ENCODE measurements at regions of chr19 and their contacts with region 1.

Region 1: GRCh38 chr19:55599468-55600279 is at the start of gene FIZ1:
- DNase-seq: peak; percentile 98
- H3K4me3 ChIP-seq: peak within 1 kb of the TSS; percentile 60 to 92 (median 80)
- H3K27ac ChIP-seq: peak within 1 kb of the TSS; percentile 89
- H3K4me1 ChIP-seq: peaks cover 10% of the 10 kb centered on the region
- H3K27me3 ChIP-seq: no peaks in the 10 kb centered on the region
- CTCF ChIP-seq: no peak
- total RNA-seq, gene FIZ1: 5.3 to 13.4 TPM

Region 2: DNA sequence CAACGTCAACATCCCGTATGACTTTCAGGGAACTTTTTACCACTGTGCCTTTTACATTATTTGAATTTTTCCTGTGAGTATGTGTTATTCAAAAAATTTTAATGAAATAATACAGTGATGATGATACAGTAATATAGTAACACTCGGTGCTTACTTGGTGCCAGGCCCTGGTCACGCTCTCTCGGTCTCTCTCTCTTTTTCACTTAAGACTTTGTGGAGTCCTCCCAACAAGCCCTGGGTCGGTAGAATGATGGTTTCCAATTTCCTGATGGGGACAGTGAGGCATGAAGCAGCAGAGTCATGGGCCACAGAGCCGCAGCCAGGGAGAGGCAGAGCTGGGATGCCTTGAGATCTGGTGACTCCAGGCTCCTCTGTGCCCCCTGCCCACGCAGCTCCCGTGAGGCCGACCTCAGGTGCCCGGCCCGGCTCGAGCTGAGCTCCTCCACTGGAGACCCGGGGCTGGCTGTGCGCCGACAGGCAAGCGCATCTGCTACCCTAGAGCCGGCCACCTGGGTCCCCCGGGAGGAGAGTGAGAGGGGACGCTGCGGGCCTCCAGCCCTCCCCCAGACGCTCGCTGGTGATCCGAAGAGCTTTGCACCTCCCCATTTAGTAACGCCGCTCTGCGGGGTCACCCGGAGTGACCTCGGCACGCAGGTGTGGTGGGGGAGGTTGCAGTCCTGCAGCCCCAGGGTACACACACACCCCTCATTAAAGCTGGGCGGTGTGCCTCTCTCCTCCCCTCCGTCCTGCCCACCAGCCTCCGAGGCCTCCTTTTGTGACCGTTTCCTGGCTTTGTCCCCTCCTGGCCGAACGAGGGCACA is 50.0 kb before region 1 on chr19:
- CTCF ChIA-PET with region 1: no interaction called
- dilution Hi-C with region 1: no loop called
- in situ Hi-C with region 1: no loop called
- intact Hi-C with region 1: loop called (anchors 5 kb)
- DNase-seq: peak; percentile 65
- H3K4me3 ChIP-seq: peak overlapping the region in 2 of 3 experiments; percentile 9 to 28
- H3K27ac ChIP-seq: peak overlapping the region; percentile 61
- H3K4me1 ChIP-seq: peaks cover 32% of the 10 kb centered on the region
- H3K27me3 ChIP-seq: no peaks in the 10 kb centered on the region
- CTCF ChIP-seq: no peak

Region 3: DNA sequence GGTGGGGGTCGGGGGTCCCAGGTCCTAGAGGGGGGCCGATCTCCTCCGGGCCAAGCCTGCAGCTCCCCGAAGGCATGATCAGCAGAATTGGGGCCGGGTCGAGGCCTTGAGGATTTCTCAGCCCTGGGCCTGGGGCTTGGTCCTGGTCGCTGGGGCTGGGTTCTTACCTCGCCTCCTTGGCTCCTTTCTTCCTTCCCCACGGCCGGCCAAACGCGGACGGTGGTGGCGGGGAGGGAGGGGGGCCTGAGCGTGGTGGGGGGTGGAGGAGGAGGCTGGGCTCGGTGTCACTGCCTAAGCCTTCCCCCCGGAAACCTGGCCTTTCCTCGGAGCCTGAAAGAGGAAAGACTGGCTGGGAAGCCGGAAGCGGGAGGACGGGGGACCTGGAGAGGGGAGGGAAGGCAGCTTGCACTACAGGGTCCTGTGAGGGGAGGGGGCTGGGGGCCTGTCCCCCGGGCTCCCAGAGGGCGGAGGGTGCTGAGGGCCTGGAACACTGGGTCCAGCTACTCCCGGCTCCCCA is 19.0 kb before region 1 on chr19 and contains the start of gene ZNF579:
- CTCF ChIA-PET with region 1: no interaction called
- dilution Hi-C with region 1: no loop called
- in situ Hi-C with region 1: no loop called
- intact Hi-C with region 1: loop called (anchors 1 kb)
- DNase-seq: peak; percentile 74
- H3K4me3 ChIP-seq: peak within 1 kb of the TSS; percentile 93 to 98 (median 96)
- H3K27ac ChIP-seq: peak within 1 kb of the TSS; percentile 29
- H3K4me1 ChIP-seq: peaks cover 10% of the 10 kb centered on the region
- H3K27me3 ChIP-seq: no peaks in the 10 kb centered on the region
- CTCF ChIP-seq: no peak
- total RNA-seq, gene ZNF579: 6.0 to 13.7 TPM

Measured in mammary epithelial cell (primary cell).